ENCODE measurements at regions of chr10 and their contacts with region 1.

Region 1: GRCh38 chr10:101569838-101570766 is 18.0 kb downstream of the POLL start:
- DNase-seq: peak; percentile 65 to 90 (median 76)
- ATAC-seq: peak; percentile 92
- H3K4me3 ChIP-seq: peak overlapping the region; percentile 61
- H3K4me3 Mint-ChIP-seq: peak overlapping the region; percentile 77
- H3K27ac ChIP-seq: no peak overlapping the region
- H3K27ac Mint-ChIP-seq: no peak overlapping the region
- H3K4me1 ChIP-seq: peaks cover 28% of the 10 kb centered on the region
- H3K4me1 Mint-ChIP-seq: no peaks in the 10 kb centered on the region
- H3K27me3 ChIP-seq: peaks cover 38 to 46% of the 10 kb centered on the region in 2 experiments
- H3K27me3 Mint-ChIP-seq: peaks cover 46% of the 10 kb centered on the region
- CTCF ChIP-seq: peak; percentile 93

Region 2: DNA sequence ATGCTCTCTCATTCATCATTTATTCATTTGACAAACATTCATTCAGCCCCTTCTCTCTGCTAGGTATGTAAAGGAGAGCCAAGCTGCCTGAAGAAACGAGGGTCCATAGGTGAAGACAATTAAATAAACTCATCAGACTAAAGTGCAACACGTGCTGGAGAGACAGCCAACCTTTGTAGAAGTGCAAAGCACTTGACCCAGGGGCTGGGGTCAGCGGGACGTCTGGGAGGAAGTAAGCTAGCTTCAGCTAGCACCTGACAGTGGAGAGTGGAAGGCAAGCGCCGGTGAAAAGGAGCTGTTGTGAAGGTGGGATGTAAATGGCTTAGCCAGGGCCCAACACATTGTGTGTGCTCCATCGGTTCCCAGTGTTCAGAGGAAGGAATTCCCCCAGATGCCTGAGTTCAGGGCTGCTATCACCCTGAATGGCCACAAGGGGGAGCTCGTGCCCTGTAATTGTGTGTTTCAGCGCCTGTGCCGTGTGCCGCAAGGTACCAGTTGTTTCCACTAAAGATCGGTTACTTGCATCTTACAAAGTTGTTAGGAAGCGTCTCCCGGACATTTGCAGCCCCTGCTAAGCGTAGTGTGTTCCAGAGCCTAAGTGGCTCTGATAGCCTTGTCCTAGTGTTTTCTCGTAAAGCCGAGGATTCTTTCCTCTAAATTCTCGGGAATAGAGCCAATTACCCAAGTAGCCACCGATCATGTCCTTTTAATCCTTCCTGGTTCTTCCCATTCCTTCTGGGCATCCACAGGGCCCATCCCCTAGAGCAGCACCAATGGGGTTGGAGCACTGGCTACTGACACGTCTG is 408.4 kb before region 1 on chr10:
- CTCF ChIA-PET with region 1: no interaction called
- POLR2A ChIA-PET with region 1: no interaction called
- intact Hi-C with region 1: loop called in 1 of 2 experiments (anchors 1 kb)
- DNase-seq: peak; percentile 53 to 90 (median 62)
- ATAC-seq: peak; percentile 97
- H3K4me3 ChIP-seq: no peak overlapping the region
- H3K4me3 Mint-ChIP-seq: no peak overlapping the region
- H3K27ac ChIP-seq: no peak overlapping the region
- H3K27ac Mint-ChIP-seq: no peak overlapping the region
- H3K4me1 ChIP-seq: peaks cover 9% of the 10 kb centered on the region
- H3K4me1 Mint-ChIP-seq: peaks cover 12% of the 10 kb centered on the region
- H3K27me3 ChIP-seq: peaks cover 25 to 34% of the 10 kb centered on the region in 2 experiments
- H3K27me3 Mint-ChIP-seq: peaks cover 92% of the 10 kb centered on the region
- CTCF ChIP-seq: peak; percentile 98

Region 3: GRCh38 chr10:101272229-101272868 is 297.8 kb before region 1 on chr10:
- CTCF ChIA-PET with region 1: no interaction called
- POLR2A ChIA-PET with region 1: no interaction called
- intact Hi-C with region 1: loop called (anchors 1 to 10 kb)
- DNase-seq: peak; percentile 28 to 73 (median 50)
- ATAC-seq: peak; percentile 90
- H3K4me3 ChIP-seq: no peak overlapping the region
- H3K4me3 Mint-ChIP-seq: no peak overlapping the region
- H3K27ac ChIP-seq: no peak overlapping the region
- H3K27ac Mint-ChIP-seq: no peak overlapping the region
- H3K4me1 ChIP-seq: peaks cover 2% of the 10 kb centered on the region
- H3K4me1 Mint-ChIP-seq: no peaks in the 10 kb centered on the region
- H3K27me3 ChIP-seq: peaks cover 3 to 7% of the 10 kb centered on the region in 2 experiments
- H3K27me3 Mint-ChIP-seq: peaks cover 42% of the 10 kb centered on the region
- CTCF ChIP-seq: peak; percentile 70

Region 4: GRCh38 chr10:101512738-101513137 is 57.4 kb before region 1 on chr10:
- CTCF ChIA-PET with region 1: no interaction called
- POLR2A ChIA-PET with region 1: no interaction called
- intact Hi-C with region 1: no loop called
- DNase-seq: no peak
- ATAC-seq: no peak
- H3K4me3 ChIP-seq: no peak overlapping the region
- H3K4me3 Mint-ChIP-seq: no peak overlapping the region
- H3K27ac ChIP-seq: no peak overlapping the region
- H3K27ac Mint-ChIP-seq: no peak overlapping the region
- H3K4me1 ChIP-seq: no peaks in the 10 kb centered on the region
- H3K4me1 Mint-ChIP-seq: no peaks in the 10 kb centered on the region
- H3K27me3 ChIP-seq: no peaks in the 10 kb centered on the region
- H3K27me3 Mint-ChIP-seq: no peaks in the 10 kb centered on the region
- CTCF ChIP-seq: no peak

Region 5: DNA sequence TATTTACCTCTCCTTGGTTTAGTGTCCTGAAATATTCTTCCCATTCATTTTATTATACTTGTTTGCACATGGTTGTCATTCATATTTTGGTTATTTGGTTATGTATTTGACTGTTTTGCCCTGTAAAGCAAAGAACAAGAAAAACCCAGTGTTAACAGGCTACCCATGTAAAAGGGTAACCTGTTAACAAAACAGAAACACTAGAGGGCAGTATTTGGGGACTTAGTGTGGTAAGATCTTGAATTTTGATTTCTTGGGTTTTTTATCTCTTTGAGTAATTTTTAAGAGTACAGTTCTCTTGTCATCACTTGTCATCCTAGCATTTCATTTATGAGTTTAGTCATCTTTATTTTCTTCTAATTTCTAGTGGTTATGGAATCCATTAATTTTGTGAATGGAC is 33.3 kb before region 1 on chr10:
- CTCF ChIA-PET with region 1: no interaction called
- POLR2A ChIA-PET with region 1: interaction called, 3 read pairs
- intact Hi-C with region 1: loop called (anchors 1 to 2 kb)
- DNase-seq: peak in 3 of 14 experiments; percentile 30 to 54 (median 52)
- ATAC-seq: no peak
- H3K4me3 ChIP-seq: no peak overlapping the region
- H3K4me3 Mint-ChIP-seq: no peak overlapping the region
- H3K27ac ChIP-seq: no peak overlapping the region
- H3K27ac Mint-ChIP-seq: no peak overlapping the region
- H3K4me1 ChIP-seq: no peaks in the 10 kb centered on the region
- H3K4me1 Mint-ChIP-seq: no peaks in the 10 kb centered on the region
- H3K27me3 ChIP-seq: no peaks in the 10 kb centered on the region
- H3K27me3 Mint-ChIP-seq: no peaks in the 10 kb centered on the region
- CTCF ChIP-seq: peak; percentile 70

Region 6: DNA sequence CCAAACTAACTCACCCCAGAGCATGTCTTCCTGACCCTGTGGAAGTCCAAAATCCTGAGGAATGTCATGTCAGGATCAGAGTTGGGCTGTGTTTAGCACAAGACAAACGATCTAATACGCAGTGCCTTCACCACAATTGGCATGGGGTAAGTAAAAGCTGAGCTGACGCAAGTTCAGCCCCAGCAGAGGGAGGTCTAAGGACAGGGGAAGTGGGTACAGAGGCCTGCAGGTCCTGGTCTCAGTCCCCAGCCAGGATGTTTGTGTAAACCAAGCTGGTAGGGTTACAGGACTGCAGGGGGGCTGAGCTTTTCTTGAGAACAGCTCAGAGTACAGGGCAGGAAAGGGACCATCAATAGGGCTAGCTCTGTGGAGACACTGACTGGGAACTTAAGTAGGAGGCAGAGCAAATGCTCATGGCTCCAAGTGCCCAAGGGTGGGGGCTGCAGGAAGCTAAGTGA is 278.8 kb after region 1 on chr10:
- CTCF ChIA-PET with region 1: no interaction called
- POLR2A ChIA-PET with region 1: no interaction called
- intact Hi-C with region 1: no loop called
- DNase-seq: peak in 2 of 14 experiments; percentile 11 to 13
- ATAC-seq: no peak
- H3K4me3 ChIP-seq: no peak overlapping the region
- H3K4me3 Mint-ChIP-seq: no peak overlapping the region
- H3K27ac ChIP-seq: no peak overlapping the region
- H3K27ac Mint-ChIP-seq: no peak overlapping the region
- H3K4me1 ChIP-seq: peaks cover 8% of the 10 kb centered on the region
- H3K4me1 Mint-ChIP-seq: peaks cover 17% of the 10 kb centered on the region
- H3K27me3 ChIP-seq: no peaks in the 10 kb centered on the region
- H3K27me3 Mint-ChIP-seq: peaks cover 3% of the 10 kb centered on the region
- CTCF ChIP-seq: no peak

Measured in CD4-positive, alpha-beta T cell (primary cell).